ENCODE measurements at regions of chr2 and their contacts with region 1.

Region 1: GRCh38 chr2:119011162-119011909 is 69.3 kb downstream of the MARCO start:
- DNase-seq: peak; percentile 49 to 80
- H3K4me3 ChIP-seq: no peak overlapping the region
- H3K27ac ChIP-seq: no peak overlapping the region
- H3K4me1 ChIP-seq: peaks cover 0 to 9% (median 7%) of the 10 kb centered on the region in 4 donors
- H3K27me3 ChIP-seq: peaks cover 0 to 56% (median 25%) of the 10 kb centered on the region in 3 donors
- CTCF ChIP-seq: peak in 3 of 7 experiments; percentile 20 to 40 (median 40)
- EP300 ChIP-seq: no peak
- POLR2A ChIP-seq: no peak

Region 2: GRCh38 chr2:118965737-118966136 is 45.6 kb before region 1 on chr2:
- intact Hi-C with region 1: no loop called
- DNase-seq: no peak
- H3K4me3 ChIP-seq: no peak overlapping the region
- H3K27ac ChIP-seq: no peak overlapping the region
- H3K4me1 ChIP-seq: no peaks in the 10 kb centered on the region
- H3K27me3 ChIP-seq: peaks cover 0 to 21% (median 0%) of the 10 kb centered on the region in 3 donors
- CTCF ChIP-seq: no peak
- EP300 ChIP-seq: no peak
- POLR2A ChIP-seq: no peak

Region 3: GRCh38 chr2:119283860-119284331 is 272.6 kb after region 1 on chr2:
- intact Hi-C with region 1: loop called (anchors 10 kb)
- DNase-seq: peak in 1 of 2 donors; percentile 77
- H3K4me3 ChIP-seq: no peak overlapping the region
- H3K27ac ChIP-seq: peak overlapping the region in 1 of 5 donors; percentile 60
- H3K4me1 ChIP-seq: peaks cover 0 to 22% (median 8%) of the 10 kb centered on the region in 4 donors
- H3K27me3 ChIP-seq: no peaks in the 10 kb centered on the region
- CTCF ChIP-seq: no peak
- EP300 ChIP-seq: no peak
- POLR2A ChIP-seq: no peak